MCF 10A (cell line): ENCODE measurements at regions of chr1 and their contacts with region 1.

Region 1: GRCh38 chr1:179365320-179366092 is at the start of gene AXDND1:
- DNase-seq: peak; percentile 79
- H3K4me3 Mint-ChIP-seq: peak within 1 kb of the TSS; percentile 77
- H3K27ac Mint-ChIP-seq: peak within 1 kb of the TSS; percentile 99
- H3K4me1 Mint-ChIP-seq: peaks cover 5% of the 10 kb centered on the region
- H3K27me3 Mint-ChIP-seq: no peaks in the 10 kb centered on the region
- CTCF ChIP-seq: no peak
- total RNA-seq, gene AXDND1: 1.1 and 1.7 TPM in 2 replicates

Region 2: GRCh38 chr1:178774263-178774662 is 591.2 kb before region 1 on chr1:
- CTCF ChIA-PET with region 1: interaction called, 4 read pairs
- POLR2A ChIA-PET with region 1: no interaction called
- intact Hi-C with region 1: loop called (anchors 1 kb)
- DNase-seq: peak; percentile 54
- H3K4me3 Mint-ChIP-seq: no peak overlapping the region
- H3K27ac Mint-ChIP-seq: no peak overlapping the region
- H3K4me1 Mint-ChIP-seq: no peaks in the 10 kb centered on the region
- H3K27me3 Mint-ChIP-seq: no peaks in the 10 kb centered on the region
- CTCF ChIP-seq: peak; percentile 55

Region 3: GRCh38 chr1:179105350-179105749 is 260.2 kb before region 1 on chr1:
- CTCF ChIA-PET with region 1: interaction called, 13 read pairs
- POLR2A ChIA-PET with region 1: no interaction called
- intact Hi-C with region 1: no loop called
- DNase-seq: peak; percentile 27
- H3K4me3 Mint-ChIP-seq: no peak overlapping the region
- H3K27ac Mint-ChIP-seq: no peak overlapping the region
- H3K4me1 Mint-ChIP-seq: no peaks in the 10 kb centered on the region
- H3K27me3 Mint-ChIP-seq: no peaks in the 10 kb centered on the region
- CTCF ChIP-seq: peak; percentile 43

Region 4: DNA sequence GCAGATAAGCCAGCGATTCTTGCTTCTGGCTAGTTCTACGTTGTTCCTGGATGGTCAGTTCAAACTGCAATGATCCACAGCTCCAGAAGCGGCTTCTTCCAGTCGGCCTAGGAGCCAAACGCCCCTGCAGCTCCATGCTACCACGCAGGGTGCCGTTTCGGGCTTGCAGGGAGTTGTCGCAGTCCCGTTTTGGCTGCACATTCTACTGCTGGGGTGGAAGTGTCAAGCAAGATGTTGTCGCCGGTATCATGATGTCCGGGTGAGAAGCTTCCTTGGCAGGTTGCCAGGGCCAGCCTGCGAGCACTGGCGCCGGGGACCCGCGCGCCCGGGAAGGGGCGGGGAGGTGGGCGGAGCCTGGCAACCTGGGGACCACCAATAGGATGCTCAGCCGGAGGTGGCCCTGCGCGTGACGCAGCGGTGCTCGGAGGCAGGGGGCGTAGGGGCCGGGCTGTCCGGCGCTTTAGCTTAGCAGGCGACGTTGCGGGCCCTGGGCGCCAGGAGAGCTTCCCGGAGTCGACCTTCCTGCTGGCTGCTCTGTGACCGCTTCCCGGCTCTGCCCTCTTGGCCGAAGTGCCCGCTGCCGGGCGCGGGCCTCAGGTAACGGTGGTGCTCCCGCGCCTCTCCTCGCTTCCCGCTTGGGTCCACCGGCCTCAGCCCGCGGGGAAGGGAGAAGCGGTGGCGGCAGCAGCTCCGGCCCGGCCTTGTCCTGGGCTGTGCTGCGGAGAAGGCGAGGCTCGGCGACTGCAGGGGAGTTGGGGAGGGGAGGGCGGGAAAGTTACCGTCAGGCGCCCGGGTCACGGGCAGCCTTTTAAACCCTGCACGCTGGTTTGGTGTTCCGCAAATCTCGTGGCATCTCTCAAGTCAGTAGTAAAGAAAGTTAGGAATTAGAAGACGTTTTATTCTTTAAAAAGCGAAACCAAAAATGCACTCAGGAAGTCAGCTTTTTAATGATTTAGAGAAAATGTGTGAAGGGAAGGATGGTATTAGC is 71.9 kb before region 1 on chr1 and contains the start of gene SOAT1:
- CTCF ChIA-PET with region 1: interaction called, 19 read pairs
- POLR2A ChIA-PET with region 1: interaction called, 29 read pairs
- intact Hi-C with region 1: loop called (anchors 1 kb)
- DNase-seq: peak; percentile 90
- H3K4me3 Mint-ChIP-seq: peak within 1 kb of the TSS; percentile 78
- H3K27ac Mint-ChIP-seq: peak within 1 kb of the TSS; percentile 68
- H3K4me1 Mint-ChIP-seq: peaks cover 29% of the 10 kb centered on the region
- H3K27me3 Mint-ChIP-seq: no peaks in the 10 kb centered on the region
- CTCF ChIP-seq: peak; percentile 16
- total RNA-seq, gene SOAT1: 28.4 and 39.7 TPM in 2 replicates

Region 5: DNA sequence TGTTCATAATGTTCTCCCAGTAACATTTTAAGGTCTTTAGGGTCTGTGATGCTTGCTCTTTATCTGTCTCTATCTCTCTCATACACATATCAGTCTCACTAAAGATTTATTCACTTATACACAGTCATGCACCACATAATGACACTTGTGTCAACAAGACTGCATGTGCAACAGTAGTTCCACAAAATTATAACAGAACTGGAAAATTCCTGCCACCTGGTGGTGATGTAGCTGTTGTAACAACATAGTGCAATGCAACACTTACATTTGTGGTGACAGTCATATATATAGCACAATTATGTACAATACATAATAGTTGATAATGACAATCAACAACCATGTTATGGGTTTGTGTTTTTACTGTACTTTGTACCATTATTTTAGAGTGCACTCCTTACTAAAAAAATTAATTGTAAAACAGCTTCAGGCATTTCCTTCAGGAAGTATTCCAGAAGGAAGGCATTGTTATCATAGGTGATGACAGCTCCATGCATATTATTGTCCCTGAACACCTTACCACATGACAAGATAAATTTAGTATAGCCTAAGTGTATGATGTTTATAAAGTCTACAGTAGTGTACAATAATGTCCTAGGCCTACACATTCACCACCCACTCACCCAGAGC is 234.2 kb after region 1 on chr1:
- CTCF ChIA-PET with region 1: interaction called, 8 read pairs
- POLR2A ChIA-PET with region 1: no interaction called
- intact Hi-C with region 1: loop called (anchors 2 kb)
- DNase-seq: peak; percentile 73
- H3K4me3 Mint-ChIP-seq: no peak overlapping the region
- H3K27ac Mint-ChIP-seq: no peak overlapping the region
- H3K4me1 Mint-ChIP-seq: no peaks in the 10 kb centered on the region
- H3K27me3 Mint-ChIP-seq: peaks cover 69% of the 10 kb centered on the region
- CTCF ChIP-seq: peak; percentile 52